Posterior vena cava (tissue), 2 donors: ENCODE measurements at regions of chr13 and their contacts with region 1.

Region 1: DNA sequence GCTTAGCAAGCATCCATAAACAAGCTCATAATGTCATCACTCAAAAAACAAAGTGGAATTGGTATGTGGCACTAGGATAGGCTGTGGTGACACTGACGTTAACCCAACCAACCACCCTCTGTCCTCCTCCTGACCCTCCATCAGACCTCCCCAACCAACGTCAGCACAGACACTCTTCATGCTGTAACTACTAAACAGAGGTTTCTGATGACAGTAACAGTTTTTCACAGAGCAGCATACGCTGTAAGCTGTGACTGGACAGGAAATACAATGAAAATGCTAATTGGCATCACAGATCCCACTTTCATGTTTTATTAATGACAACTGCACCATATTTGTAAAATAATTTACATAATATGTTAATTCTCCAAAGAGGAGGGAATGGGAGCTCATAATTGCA is 238.0 kb downstream of the IRS2 start:
- DNase-seq: no peak

Region 2: DNA sequence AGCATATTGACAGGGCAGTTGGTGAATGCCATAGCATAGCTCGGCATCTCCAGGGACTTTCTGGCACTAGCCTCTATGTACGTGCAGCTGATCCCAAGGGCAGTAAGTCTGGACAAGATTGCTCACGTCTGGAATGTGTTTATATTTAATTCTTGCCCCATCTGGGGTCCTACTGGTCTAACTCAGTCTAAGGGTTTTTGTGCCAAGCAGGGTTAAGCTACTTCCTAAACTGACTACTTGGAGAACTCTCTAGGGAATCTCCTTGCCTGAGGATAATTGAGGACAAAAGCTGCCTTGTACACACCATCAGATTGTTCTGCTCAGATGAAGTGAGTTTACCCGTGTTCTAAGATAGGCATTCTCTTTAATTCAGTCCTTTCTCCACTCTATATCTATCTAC is 560.9 kb before region 1 on chr13:
- intact Hi-C with region 1: loop called in 1 of 2 experiments (anchors 10 kb)
- DNase-seq: no peak

Region 3: GRCh38 chr13:109479991-109480691 is 68.2 kb before region 1 on chr13:
- intact Hi-C with region 1: loop called in 1 of 2 experiments (anchors 2 kb)
- DNase-seq: no peak